Transverse colon (tissue), 4 donors: ENCODE measurements at regions of chr1 and their contacts with region 1.

Region 1: GRCh38 chr1:114729782-114730181 is 13.2 kb upstream of the NRAS start:
- DNase-seq: no peak
- H3K4me3 ChIP-seq: no peak overlapping the region
- H3K27ac ChIP-seq: no peak overlapping the region
- H3K4me1 ChIP-seq: peaks cover 0 to 4% (median 0%) of the 10 kb centered on the region in 4 donors
- H3K27me3 ChIP-seq: no peaks in the 10 kb centered on the region
- CTCF ChIP-seq: no peak
- EP300 ChIP-seq: no peak
- POLR2A ChIP-seq: no peak

Region 2: GRCh38 chr1:114819869-114820268 is 90.1 kb after region 1 on chr1:
- in situ Hi-C with region 1: no loop called
- intact Hi-C with region 1: no loop called
- DNase-seq: no peak
- H3K4me3 ChIP-seq: no peak overlapping the region
- H3K27ac ChIP-seq: no peak overlapping the region
- H3K4me1 ChIP-seq: no peaks in the 10 kb centered on the region
- H3K27me3 ChIP-seq: no peaks in the 10 kb centered on the region
- CTCF ChIP-seq: no peak
- EP300 ChIP-seq: no peak
- POLR2A ChIP-seq: no peak

Region 3: GRCh38 chr1:115198938-115199337 is 469.2 kb after region 1 on chr1:
- in situ Hi-C with region 1: no loop called
- intact Hi-C with region 1: loop called (anchors 5 kb)
- DNase-seq: no peak
- H3K4me3 ChIP-seq: no peak overlapping the region
- H3K27ac ChIP-seq: no peak overlapping the region
- H3K4me1 ChIP-seq: no peaks in the 10 kb centered on the region
- H3K27me3 ChIP-seq: no peaks in the 10 kb centered on the region
- CTCF ChIP-seq: no peak
- EP300 ChIP-seq: no peak
- POLR2A ChIP-seq: no peak